Left cardiac atrium (tissue), 4 donors: ENCODE measurements at regions of chr20 and their contacts with region 1.

Region 1: GRCh38 chr20:46757754-46758678 is 48.6 kb downstream of the SLC2A10 start:
- DNase-seq: peak; percentile 38
- ATAC-seq: peak in 1 of 2 donors; percentile 54

Region 2: DNA sequence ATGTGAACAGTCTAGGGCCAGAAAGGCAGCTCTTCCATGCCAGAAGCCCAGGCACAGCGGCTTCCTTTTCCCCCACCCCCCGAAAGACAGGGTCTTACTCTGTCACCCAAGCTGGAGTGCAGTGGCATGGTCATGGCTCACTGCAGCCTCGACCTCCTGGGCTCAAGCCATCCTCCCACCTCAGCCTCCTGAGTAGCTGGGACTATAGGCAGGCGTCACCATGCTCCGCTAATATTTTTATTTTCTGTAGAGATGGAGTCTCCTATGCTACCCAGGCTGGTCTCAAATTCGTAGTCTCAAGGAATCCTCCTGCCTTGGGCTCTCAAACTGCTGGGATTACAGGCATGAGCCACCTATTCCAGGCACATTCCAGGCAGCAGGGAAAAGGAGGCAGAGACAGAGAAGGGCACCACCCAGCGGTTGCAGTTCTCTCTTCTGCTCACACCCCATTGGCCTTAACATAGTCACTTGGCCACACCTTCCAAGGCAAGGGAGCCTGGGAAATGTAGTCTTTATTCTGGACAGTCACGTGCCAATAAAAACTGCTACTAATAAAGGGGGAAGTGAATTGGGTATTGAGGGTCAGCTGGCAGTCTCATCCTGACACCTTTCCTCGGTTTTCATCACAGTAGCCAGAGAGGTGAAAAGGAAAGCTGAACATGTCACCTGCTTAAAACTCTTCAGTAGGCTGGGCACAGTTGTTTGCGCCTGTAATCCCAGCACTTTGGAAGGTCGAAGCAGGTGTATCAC is 392.6 kb after region 1 on chr20:
- intact Hi-C with region 1: loop called (anchors 2 to 5 kb)
- DNase-seq: peak; percentile 63
- ATAC-seq: peak; percentile 90 to 93

Region 3: DNA sequence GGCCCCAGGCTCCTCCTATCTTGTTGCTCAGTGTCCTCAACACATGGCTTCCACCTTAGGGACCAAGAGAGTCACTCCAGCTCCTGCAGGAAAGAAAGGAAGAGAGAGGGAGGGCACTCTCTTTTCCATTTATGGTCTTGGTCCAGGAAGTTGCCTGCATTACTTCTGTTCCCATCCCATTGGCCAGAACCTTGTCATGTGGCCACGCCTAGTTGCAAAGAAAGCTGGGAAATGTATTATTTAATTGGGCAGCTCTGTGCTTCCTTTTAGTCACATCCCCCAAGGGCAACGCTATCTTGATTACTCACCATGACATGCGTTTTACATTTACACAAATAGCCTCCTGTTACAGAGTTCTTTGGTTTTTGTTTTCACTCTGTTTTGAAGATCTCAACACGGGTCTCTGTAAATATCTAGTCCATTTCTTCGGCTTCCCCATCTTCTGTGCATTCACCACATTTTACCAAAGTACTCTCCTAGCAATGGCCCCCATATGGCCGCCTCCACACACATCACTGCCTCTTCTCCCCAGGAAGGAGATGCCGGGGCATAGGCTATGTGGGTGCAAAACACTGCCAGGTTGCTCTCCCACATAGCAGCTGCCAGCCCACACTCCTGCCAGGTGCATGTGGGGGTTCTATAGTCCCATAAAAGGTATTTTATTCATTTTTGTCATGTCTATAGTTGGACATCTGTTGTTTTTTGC is 634.2 kb after region 1 on chr20:
- intact Hi-C with region 1: loop called in 1 of 2 experiments (anchors 10 kb)
- DNase-seq: peak; percentile 29
- ATAC-seq: peak; percentile 41 to 84

Region 4: GRCh38 chr20:47610247-47610944 is 852.4 kb after region 1 on chr20:
- intact Hi-C with region 1: loop called in 1 of 2 experiments (anchors 10 kb)
- DNase-seq: peak; percentile 79
- ATAC-seq: peak in 1 of 2 donors; percentile 89

Region 5: GRCh38 chr20:47620808-47621805 is 863.1 kb after region 1 on chr20:
- intact Hi-C with region 1: loop called (anchors 10 kb)
- DNase-seq: no peak
- ATAC-seq: peak in 1 of 2 donors; percentile 34